PC-3 (cell line): ENCODE measurements at regions of chr11 and their contacts with region 1.

Region 1: GRCh38 chr11:129117595-129118350 is 74.4 kb downstream of the ARHGAP32 start:
- DNase-seq: peak; percentile 77
- ATAC-seq: no peak
- H3K4me3 ChIP-seq: no peak overlapping the region
- H3K27ac ChIP-seq: no peak overlapping the region
- H3K4me1 ChIP-seq: peaks cover 27% of the 10 kb centered on the region
- H3K27me3 ChIP-seq: no peaks in the 10 kb centered on the region
- CTCF ChIP-seq: peak; percentile 99

Region 2: GRCh38 chr11:128884703-128885338 is 233.0 kb before region 1 on chr11:
- CTCF ChIA-PET with region 1: no interaction called
- POLR2A ChIA-PET with region 1: no interaction called
- intact Hi-C with region 1: loop called (anchors 1 kb)
- DNase-seq: peak; percentile 93
- ATAC-seq: peak; percentile 92
- H3K4me3 ChIP-seq: peak overlapping the region; percentile 45; the same call in 1 of the 2 replicates
- H3K27ac ChIP-seq: no peak overlapping the region
- H3K4me1 ChIP-seq: no peaks in the 10 kb centered on the region
- H3K27me3 ChIP-seq: peaks cover 15% of the 10 kb centered on the region; the same call in 1 of the 2 replicates
- CTCF ChIP-seq: peak; percentile 91

Region 3: DNA sequence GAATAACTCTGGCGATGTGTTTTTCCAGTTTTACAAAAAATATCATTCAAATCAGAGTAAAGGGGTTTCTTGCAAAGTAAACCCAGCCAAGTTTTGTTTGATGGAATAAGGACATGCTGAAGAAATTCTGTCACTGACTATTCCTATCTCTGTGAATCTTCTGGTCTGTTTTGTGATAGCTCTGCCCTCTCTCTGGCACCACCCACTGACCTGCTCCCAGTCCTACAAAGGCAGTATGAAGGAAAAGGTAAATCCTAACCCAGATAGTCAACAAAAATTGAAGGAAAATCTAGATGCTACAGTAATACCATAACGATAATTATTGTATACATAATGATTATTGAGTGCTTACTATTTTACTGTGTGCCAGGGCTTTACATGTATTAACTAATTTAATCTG is 98.8 kb before region 1 on chr11:
- CTCF ChIA-PET with region 1: no interaction called
- POLR2A ChIA-PET with region 1: interaction called, 5 read pairs
- intact Hi-C with region 1: loop called (anchors 2 kb)
- DNase-seq: peak; percentile 71
- ATAC-seq: peak; percentile 41
- H3K4me3 ChIP-seq: peak overlapping the region; percentile 46; the same call in 1 of the 2 replicates
- H3K27ac ChIP-seq: peak overlapping the region; percentile 77
- H3K4me1 ChIP-seq: peaks cover 75% of the 10 kb centered on the region
- H3K27me3 ChIP-seq: no peaks in the 10 kb centered on the region
- CTCF ChIP-seq: peak; percentile 51

Region 4: GRCh38 chr11:129192156-129192555 is 74.4 kb after region 1 on chr11 and contains the start of gene ARHGAP32:
- CTCF ChIA-PET with region 1: no interaction called
- POLR2A ChIA-PET with region 1: no interaction called
- intact Hi-C with region 1: loop called (anchors 5 kb)
- DNase-seq: peak; percentile 33
- ATAC-seq: peak; percentile 57
- H3K4me3 ChIP-seq: peak within 1 kb of the TSS; percentile 16; the same call in 1 of the 2 replicates
- H3K27ac ChIP-seq: peak within 1 kb of the TSS; percentile 26
- H3K4me1 ChIP-seq: peaks cover 28% of the 10 kb centered on the region
- H3K27me3 ChIP-seq: no peaks in the 10 kb centered on the region
- CTCF ChIP-seq: no peak
- total RNA-seq, gene ARHGAP32: 12.0 and 13.7 TPM in 2 replicates

Region 5: GRCh38 chr11:129230006-129230405 is 112.2 kb after region 1 on chr11:
- CTCF ChIA-PET with region 1: no interaction called
- POLR2A ChIA-PET with region 1: no interaction called
- intact Hi-C with region 1: loop called (anchors 1 kb)
- DNase-seq: peak; percentile 43
- ATAC-seq: peak; percentile 44; the same call in 1 of the 2 replicates
- H3K4me3 ChIP-seq: no peak overlapping the region
- H3K27ac ChIP-seq: no peak overlapping the region
- H3K4me1 ChIP-seq: peaks cover 10% of the 10 kb centered on the region
- H3K27me3 ChIP-seq: no peaks in the 10 kb centered on the region
- CTCF ChIP-seq: peak; percentile 55

Region 6: DNA sequence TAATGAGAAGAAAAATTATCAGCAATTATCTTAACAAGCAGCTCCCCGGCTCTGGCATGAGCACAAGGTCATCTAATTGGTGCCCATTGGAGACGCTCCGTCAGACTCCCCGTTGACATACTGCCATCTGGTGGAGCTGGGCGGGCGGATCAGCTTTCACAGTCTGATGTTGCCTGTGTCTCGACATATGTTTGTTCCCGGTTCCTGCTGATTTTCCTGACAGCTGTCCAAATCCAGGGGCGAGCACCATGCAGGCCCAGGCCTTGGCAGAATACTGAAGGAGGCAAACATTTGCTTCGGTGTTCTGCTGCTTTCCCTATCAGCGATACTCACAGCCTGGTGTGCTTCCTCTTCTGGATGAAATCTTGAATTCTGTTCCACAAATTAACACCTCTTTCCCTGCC is 214.1 kb after region 1 on chr11:
- CTCF ChIA-PET with region 1: interaction called, 6 read pairs
- POLR2A ChIA-PET with region 1: no interaction called
- intact Hi-C with region 1: loop called (anchors 1 kb)
- DNase-seq: peak; percentile 95
- ATAC-seq: peak; percentile 97
- H3K4me3 ChIP-seq: no peak overlapping the region
- H3K27ac ChIP-seq: no peak overlapping the region
- H3K4me1 ChIP-seq: peaks cover 11% of the 10 kb centered on the region; the same call in 1 of the 2 replicates
- H3K27me3 ChIP-seq: no peaks in the 10 kb centered on the region
- CTCF ChIP-seq: peak; percentile 97